ENCODE measurements at regions of chr7 and their contacts with region 1.

Region 1: DNA sequence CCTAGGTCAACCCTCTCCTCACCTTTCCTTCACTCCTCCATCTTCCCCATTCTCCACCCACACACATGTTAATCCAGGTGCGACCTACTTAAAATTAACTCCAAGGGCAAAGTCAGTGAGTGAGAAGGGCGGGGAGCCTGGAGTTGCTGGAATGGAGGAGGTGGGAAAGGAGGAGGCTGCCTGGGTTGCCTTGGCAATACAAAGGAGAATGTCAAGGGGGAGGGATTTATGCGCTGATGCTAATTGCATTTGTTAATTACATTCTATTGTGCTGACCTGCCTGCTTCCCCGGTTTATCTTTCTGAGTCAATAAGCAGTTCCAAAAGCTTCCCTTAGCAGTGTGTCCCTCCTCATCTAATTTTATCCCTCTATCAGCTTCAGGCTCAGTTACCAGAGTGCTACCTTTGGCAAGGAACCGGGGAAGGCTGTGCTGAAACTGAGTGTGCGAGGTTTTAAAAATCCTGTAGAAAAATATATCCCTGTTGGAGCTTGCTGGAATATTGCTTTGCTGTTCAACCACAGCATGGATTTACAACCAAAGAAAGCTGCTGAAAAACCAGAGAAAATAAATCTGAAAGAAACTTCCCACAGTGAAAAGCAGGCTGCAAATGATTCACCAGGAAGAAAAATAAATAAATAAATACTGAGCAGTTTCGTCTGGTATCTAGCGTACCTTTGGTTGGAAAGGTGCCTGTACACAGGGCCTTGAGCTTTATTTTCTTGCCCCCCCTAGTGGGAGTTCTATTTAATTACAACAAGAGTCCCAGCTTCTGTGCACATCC is 113.2 kb upstream of the DGKB start:
- DNase-seq: peak; percentile 36 to 79 (median 70)
- ATAC-seq: peak; percentile 94
- H3K4me3 ChIP-seq: no peak overlapping the region
- H3K27ac ChIP-seq: peak overlapping the region in 3 of 4 donors; percentile 19 to 54 (median 51)
- H3K4me1 ChIP-seq: peaks cover 5% of the 10 kb centered on the region
- H3K27me3 ChIP-seq: no peaks in the 10 kb centered on the region
- CTCF ChIP-seq: peak; percentile 54 to 83 (median 77)
- POLR2A ChIP-seq: no peak

Region 2: DNA sequence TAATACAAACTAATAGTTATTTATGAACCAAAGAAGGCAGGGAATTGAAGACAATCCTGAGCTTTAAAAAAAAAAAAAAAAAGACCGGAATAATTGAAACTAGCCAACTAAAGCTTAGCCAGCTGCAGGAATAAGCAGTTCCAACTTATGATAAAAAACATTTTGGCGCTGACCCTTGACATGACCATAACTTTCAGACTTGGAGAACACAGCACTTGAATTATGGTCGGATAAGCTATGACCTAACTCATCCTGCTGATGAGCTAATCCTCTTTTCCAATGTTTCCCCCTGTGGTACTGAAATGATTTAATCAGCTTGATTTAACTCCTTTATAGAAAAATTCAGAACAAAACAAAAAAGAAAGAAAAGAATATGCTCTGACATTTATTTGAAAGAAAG is 295.0 kb before region 1 on chr7:
- intact Hi-C with region 1: loop called (anchors 10 kb)
- DNase-seq: no peak
- ATAC-seq: no peak
- H3K4me3 ChIP-seq: no peak overlapping the region
- H3K27ac ChIP-seq: no peak overlapping the region
- H3K4me1 ChIP-seq: no peaks in the 10 kb centered on the region
- H3K27me3 ChIP-seq: no peaks in the 10 kb centered on the region
- CTCF ChIP-seq: no peak
- POLR2A ChIP-seq: no peak

Measured in body of pancreas (tissue), 4 donors.